AG04450 (cell line): ENCODE measurements at regions of chr4 and their contacts with region 1.

Region 1: DNA sequence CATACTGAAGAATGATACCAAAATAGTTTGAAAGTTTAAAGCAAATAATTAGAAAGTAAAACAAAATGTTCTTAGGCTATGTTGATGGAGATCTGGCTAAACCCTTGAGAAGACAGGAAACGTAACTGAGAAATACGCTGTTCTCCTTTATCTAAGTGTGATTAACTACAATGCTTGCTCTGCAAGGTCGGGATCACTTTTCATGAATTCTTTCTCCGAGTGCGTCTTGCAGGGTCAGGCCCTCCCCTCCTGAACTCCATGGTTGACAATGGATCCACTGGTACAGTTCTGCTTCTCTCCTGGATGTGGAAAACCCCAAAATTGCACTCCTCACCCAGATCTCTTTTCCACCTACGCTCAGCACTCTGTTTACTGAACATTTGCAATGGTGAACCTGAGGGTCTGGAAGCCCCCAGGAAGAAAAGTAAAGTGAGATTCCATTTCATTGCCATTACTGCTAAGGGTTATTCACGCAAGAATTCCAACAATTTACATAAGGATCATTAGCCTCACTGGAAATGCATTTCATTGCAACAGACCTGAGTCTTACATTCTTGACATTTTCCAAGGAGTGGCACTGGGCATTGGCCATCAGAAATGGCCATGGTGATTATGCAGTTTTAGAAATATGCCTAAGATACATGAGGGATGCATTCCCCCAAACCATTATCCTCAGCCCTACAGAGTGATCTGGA is 24.6 kb upstream of the WWC2 start:
- DNase-seq: peak; percentile 6
- H3K4me3 ChIP-seq: no peak overlapping the region
- H3K27ac ChIP-seq: no peak overlapping the region
- H3K27me3 ChIP-seq: no peaks in the 10 kb centered on the region
- CTCF ChIP-seq: no peak

Region 2: DNA sequence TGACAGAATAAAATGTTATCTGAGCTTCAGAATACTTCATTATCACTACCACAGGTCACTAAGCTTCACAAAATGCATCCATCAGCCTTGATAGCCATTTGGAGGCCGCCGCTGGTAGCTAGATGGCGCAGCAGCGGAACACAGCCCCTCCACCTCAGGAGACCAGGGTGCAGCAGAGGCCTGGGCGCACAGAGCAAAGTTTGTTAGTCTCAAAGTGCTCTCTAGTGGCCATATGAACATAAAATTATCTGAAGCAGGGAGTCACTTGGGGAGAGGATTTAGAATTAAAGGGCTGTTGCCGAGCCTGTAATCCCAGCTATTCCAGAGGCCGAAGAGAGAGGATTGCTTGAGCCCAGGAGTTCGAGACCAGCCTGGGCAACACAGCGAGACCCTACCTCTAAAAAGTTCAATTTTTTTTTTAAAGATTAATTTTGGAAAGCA is 149.1 kb before region 1 on chr4:
- CTCF ChIA-PET with region 1: interaction called, 10 read pairs
- POLR2A ChIA-PET with region 1: no interaction called
- DNase-seq: no peak
- H3K4me3 ChIP-seq: no peak overlapping the region
- H3K27ac ChIP-seq: peak overlapping the region; percentile 47
- H3K27me3 ChIP-seq: no peaks in the 10 kb centered on the region
- CTCF ChIP-seq: peak; percentile 68

Region 3: GRCh38 chr4:183059797-183060196 is 14.6 kb before region 1 on chr4:
- CTCF ChIA-PET with region 1: interaction called, 15 read pairs
- POLR2A ChIA-PET with region 1: no interaction called
- DNase-seq: no peak
- H3K4me3 ChIP-seq: no peak overlapping the region
- H3K27ac ChIP-seq: no peak overlapping the region
- H3K27me3 ChIP-seq: peaks cover 3% of the 10 kb centered on the region
- CTCF ChIP-seq: no peak

Region 4: DNA sequence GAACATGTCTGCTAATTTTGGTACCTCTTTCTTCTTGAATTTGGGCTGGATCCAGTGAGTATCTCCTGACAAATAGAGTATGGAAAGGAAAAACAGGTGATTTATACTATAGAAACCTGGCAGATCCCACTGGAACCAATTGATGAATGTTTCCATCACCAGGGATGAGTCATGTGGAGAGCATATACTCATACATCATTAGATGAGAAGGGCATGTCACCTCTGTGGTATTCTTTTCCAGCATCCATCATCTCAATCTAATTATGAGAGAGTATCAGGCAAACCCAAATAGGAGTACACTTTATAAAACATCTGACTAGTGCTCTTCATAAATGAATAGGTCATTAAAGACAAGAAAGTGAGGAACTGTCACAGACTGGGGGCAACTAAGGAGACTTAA is 155.0 kb after region 1 on chr4:
- CTCF ChIA-PET with region 1: interaction called, 10 read pairs
- POLR2A ChIA-PET with region 1: no interaction called
- DNase-seq: no peak
- H3K4me3 ChIP-seq: no peak overlapping the region
- H3K27ac ChIP-seq: no peak overlapping the region
- H3K27me3 ChIP-seq: no peaks in the 10 kb centered on the region
- CTCF ChIP-seq: no peak

Region 5: GRCh38 chr4:183249857-183250256 is 175.4 kb after region 1 on chr4:
- CTCF ChIA-PET with region 1: interaction called, 170 read pairs
- POLR2A ChIA-PET with region 1: no interaction called
- DNase-seq: no peak
- H3K4me3 ChIP-seq: no peak overlapping the region
- H3K27ac ChIP-seq: no peak overlapping the region
- H3K27me3 ChIP-seq: no peaks in the 10 kb centered on the region
- CTCF ChIP-seq: peak; percentile 45